Mammary epithelial cell (primary cell): ENCODE measurements at regions of chr14 and their contacts with region 1.

Region 1: GRCh38 chr14:100383727-100384158 is 60.6 kb downstream of the SLC25A47 start:
- DNase-seq: peak; percentile 35
- H3K4me3 ChIP-seq: no peak overlapping the region
- H3K27ac ChIP-seq: no peak overlapping the region
- H3K4me1 ChIP-seq: peaks cover 17% of the 10 kb centered on the region
- H3K27me3 ChIP-seq: no peaks in the 10 kb centered on the region
- CTCF ChIP-seq: peak; percentile 88 to 91

Region 2: GRCh38 chr14:100336618-100337530 is 46.9 kb before region 1 on chr14:
- CTCF ChIA-PET with region 1: no interaction called
- dilution Hi-C with region 1: loop called (anchors 5 kb)
- in situ Hi-C with region 1: no loop called
- intact Hi-C with region 1: no loop called
- DNase-seq: no peak
- H3K4me3 ChIP-seq: no peak overlapping the region
- H3K27ac ChIP-seq: no peak overlapping the region
- H3K4me1 ChIP-seq: peaks cover 3% of the 10 kb centered on the region
- H3K27me3 ChIP-seq: no peaks in the 10 kb centered on the region
- CTCF ChIP-seq: no peak

Region 3: DNA sequence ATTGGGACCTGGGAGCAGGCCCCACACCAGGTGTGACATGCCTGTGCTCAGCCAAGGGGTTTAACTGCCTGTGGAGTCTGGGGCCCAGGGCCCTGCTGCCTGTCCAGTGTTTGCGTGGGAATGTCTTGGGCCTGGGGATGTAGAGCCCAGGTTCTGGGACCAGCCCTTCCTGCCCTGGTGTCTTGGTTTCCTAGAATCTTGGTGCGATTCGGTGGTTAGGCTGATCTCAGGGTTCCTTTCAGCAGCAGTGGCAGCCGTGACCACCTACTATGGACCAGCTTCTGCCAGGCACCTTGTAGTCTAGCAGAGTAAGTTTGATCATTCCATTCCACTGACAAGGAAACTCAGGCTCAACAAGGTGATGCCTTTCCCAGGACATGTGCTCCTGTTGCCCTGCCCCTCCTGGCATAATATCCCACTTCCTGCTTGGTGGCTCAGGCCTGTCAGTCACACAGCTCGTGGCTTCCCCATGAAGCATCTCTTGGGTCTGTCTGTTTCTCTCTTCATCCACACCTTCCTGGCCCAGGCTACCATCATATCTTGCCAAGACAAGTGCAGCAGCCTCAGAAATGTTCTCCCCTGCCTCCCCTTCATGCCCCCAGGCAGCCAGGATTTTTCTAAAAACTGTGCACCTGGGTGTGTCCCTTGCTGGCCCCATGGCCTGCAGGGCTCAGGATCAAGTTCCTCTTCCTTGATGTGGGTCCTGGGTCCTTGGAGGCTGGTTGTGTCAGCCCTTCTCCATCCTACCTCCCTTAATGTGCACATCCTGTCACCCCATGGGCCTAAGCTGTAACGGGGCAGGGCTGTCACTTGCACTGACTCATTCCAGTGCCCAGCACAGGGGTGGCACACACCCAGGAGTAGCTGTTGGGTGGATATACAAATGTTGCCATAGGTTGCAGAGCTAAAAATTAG is 41.0 kb after region 1 on chr14:
- CTCF ChIA-PET with region 1: no interaction called
- dilution Hi-C with region 1: loop called (anchors 5 kb)
- in situ Hi-C with region 1: no loop called
- intact Hi-C with region 1: no loop called
- DNase-seq: no peak
- H3K4me3 ChIP-seq: no peak overlapping the region
- H3K27ac ChIP-seq: no peak overlapping the region
- H3K4me1 ChIP-seq: peaks cover 24% of the 10 kb centered on the region
- H3K27me3 ChIP-seq: no peaks in the 10 kb centered on the region
- CTCF ChIP-seq: no peak

Region 4: DNA sequence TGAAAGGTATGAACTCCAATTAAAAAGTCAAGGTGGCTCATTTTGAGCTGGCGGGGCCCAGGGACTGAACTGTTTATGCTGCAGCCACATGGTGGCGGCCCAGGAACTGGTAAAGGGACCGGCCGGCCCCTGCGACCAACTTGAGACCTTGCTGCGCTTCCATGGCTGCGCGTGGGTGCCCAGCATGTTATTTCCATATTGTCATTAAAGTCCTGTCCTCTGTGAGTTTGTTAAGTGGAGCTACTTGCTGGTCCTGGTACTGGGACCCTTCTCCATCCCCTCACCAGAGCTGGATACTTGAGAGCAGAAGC is 141.1 kb after region 1 on chr14:
- CTCF ChIA-PET with region 1: no interaction called
- dilution Hi-C with region 1: no loop called
- in situ Hi-C with region 1: no loop called
- intact Hi-C with region 1: no loop called
- DNase-seq: no peak
- H3K4me3 ChIP-seq: no peak overlapping the region
- H3K27ac ChIP-seq: no peak overlapping the region
- H3K4me1 ChIP-seq: no peaks in the 10 kb centered on the region
- H3K27me3 ChIP-seq: no peaks in the 10 kb centered on the region
- CTCF ChIP-seq: no peak

Region 5: GRCh38 chr14:100645192-100645990 is 261.6 kb after region 1 on chr14:
- CTCF ChIA-PET with region 1: interaction called, 5 read pairs
- dilution Hi-C with region 1: loop called (anchors 5 kb)
- in situ Hi-C with region 1: loop called (anchors 5 kb)
- intact Hi-C with region 1: loop called (anchors 1 kb)
- DNase-seq: peak; percentile 70
- H3K4me3 ChIP-seq: no peak overlapping the region
- H3K27ac ChIP-seq: no peak overlapping the region
- H3K4me1 ChIP-seq: peaks cover 4% of the 10 kb centered on the region
- H3K27me3 ChIP-seq: no peaks in the 10 kb centered on the region
- CTCF ChIP-seq: peak; percentile 74 to 83

Region 6: DNA sequence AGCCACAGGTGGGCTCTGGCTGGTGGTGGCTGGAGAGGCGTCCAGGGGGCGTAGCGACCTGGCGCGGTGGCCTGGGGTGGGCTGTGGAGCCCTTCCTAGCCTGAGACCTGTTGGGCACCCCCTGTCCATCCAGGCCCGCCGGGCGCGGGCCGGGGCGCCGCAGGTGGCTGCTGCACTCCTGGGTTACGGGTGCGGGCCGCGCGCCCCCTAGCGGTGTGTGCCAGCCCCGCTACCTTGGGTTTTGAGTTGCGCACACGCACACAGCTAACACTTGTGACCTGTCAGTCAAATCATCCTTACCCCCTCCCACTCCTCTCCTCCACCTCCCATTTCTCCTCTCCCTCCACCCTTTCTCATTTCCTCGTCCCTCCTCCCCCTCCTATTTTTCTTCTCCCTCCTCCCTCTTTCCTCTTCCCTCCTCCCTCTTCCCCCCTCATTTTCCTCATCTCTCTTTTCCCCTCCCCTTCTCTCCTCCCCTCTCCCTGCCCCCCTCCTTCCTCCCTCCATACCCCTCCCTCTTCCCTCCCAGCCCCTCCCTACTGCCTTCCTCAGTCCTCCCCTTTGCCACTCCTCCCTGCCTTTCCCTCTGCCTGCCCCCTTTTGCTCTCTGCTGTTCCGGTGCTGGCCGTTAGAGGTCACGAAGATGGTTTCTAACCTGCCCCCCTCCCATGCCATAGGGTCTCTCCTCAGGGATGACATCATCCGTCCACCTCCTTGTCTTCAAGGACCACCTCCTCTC is 444.5 kb after region 1 on chr14:
- CTCF ChIA-PET with region 1: no interaction called
- dilution Hi-C with region 1: no loop called
- in situ Hi-C with region 1: no loop called
- intact Hi-C with region 1: loop called (anchors 1 kb)
- DNase-seq: peak; percentile 20
- H3K4me3 ChIP-seq: peak overlapping the region; percentile 32 to 40 (median 32)
- H3K27ac ChIP-seq: no peak overlapping the region
- H3K4me1 ChIP-seq: no peaks in the 10 kb centered on the region
- H3K27me3 ChIP-seq: peaks cover 6% of the 10 kb centered on the region
- CTCF ChIP-seq: peak; percentile 46 to 69

Region 7: DNA sequence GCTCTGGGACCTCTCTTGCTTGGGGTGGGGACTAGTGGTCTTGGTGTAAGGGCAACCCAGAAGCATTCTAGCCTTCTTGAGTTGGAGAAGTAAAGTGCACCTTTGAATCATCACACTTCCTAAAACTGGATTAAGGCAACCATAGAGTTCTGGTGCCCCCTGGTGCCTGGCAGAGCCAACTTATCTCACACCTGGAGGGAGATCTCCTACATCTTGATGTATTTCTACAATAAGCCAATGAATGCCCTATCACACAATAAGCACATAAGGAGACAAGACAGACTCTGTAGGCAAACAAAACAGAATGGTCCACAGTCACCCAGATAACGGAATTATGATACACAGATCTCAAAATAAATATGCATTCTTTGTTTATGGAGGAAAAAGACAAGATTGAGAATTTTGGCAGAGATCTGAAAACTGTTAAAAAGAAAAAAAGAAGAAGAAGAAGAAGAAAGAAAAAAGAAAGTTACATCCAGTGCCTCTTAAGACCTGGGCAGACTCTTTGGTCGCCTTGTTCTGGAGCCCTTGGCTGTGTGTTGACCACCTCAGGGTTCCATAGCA is 1281.9 kb after region 1 on chr14:
- CTCF ChIA-PET with region 1: no interaction called
- dilution Hi-C with region 1: no loop called
- in situ Hi-C with region 1: loop called in 1 of 2 experiments (anchors 25 kb)
- intact Hi-C with region 1: loop called (anchors 1 kb)
- DNase-seq: peak; percentile 52
- H3K4me3 ChIP-seq: no peak overlapping the region
- H3K27ac ChIP-seq: no peak overlapping the region
- H3K4me1 ChIP-seq: no peaks in the 10 kb centered on the region
- H3K27me3 ChIP-seq: no peaks in the 10 kb centered on the region
- CTCF ChIP-seq: peak; percentile 70 to 84